Activated naive CD4-positive, alpha-beta T cell treated with anti-CD3 and anti-CD28 coated beads for 36 hours (primary cell): ENCODE measurements at regions of chr2 and their contacts with region 1.

Region 1: GRCh38 chr2:58046585-58047372 is at the start of gene VRK2:
- DNase-seq: peak; percentile 90
- H3K4me3 Mint-ChIP-seq: peak within 1 kb of the TSS; percentile 88
- H3K27ac Mint-ChIP-seq: peak within 1 kb of the TSS; percentile 93
- H3K4me1 Mint-ChIP-seq: peaks cover 45% of the 10 kb centered on the region
- H3K27me3 Mint-ChIP-seq: no peaks in the 10 kb centered on the region
- total RNA-seq, gene VRK2: 14.7 to 16.1 TPM

Region 2: GRCh38 chr2:58019209-58019608 is 27.6 kb before region 1 on chr2:
- CTCF ChIA-PET with region 1: no interaction called
- intact Hi-C with region 1: loop called (anchors 1 kb)
- DNase-seq: no peak
- H3K4me3 Mint-ChIP-seq: no peak overlapping the region
- H3K27ac Mint-ChIP-seq: no peak overlapping the region
- H3K4me1 Mint-ChIP-seq: peaks cover 13% of the 10 kb centered on the region
- H3K27me3 Mint-ChIP-seq: no peaks in the 10 kb centered on the region

Region 3: DNA sequence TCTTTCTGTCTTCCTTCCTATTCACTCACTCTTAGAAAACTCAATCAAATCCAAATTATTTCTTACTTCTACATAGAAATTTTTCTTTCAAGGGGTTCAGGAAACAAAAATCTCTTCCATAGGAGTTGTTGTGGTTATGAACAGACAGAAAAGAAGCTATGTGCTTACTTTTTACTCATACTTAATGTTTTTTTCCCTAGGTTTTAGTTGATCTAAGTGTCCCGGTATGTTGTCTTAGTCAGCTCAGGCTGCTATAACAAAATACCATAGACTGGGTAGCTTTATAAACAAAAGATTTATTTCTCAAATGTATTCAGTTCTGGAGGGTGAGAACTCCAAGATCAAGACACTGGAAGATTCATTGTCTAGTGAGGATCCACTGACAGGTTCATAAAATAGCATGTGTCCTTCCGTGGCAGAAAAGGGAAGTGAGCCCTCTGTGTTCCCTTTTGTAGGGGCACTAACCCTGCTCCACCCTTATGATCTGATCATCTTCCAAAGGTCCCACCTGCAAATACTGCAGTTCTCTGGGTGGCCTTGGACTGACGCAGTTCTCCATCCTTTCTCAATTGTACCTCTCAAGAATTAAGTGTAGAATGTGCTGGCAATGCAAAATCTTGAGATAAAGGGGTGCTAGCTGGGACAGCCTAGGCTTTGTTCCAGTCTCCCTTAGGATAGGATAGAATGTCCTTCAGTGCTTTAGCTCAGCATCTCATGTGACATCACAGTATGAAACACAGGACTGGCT is 14.6 kb before region 1 on chr2:
- CTCF ChIA-PET with region 1: no interaction called
- intact Hi-C with region 1: no loop called
- DNase-seq: no peak
- H3K4me3 Mint-ChIP-seq: no peak overlapping the region
- H3K27ac Mint-ChIP-seq: no peak overlapping the region
- H3K4me1 Mint-ChIP-seq: no peaks in the 10 kb centered on the region
- H3K27me3 Mint-ChIP-seq: no peaks in the 10 kb centered on the region

Region 4: DNA sequence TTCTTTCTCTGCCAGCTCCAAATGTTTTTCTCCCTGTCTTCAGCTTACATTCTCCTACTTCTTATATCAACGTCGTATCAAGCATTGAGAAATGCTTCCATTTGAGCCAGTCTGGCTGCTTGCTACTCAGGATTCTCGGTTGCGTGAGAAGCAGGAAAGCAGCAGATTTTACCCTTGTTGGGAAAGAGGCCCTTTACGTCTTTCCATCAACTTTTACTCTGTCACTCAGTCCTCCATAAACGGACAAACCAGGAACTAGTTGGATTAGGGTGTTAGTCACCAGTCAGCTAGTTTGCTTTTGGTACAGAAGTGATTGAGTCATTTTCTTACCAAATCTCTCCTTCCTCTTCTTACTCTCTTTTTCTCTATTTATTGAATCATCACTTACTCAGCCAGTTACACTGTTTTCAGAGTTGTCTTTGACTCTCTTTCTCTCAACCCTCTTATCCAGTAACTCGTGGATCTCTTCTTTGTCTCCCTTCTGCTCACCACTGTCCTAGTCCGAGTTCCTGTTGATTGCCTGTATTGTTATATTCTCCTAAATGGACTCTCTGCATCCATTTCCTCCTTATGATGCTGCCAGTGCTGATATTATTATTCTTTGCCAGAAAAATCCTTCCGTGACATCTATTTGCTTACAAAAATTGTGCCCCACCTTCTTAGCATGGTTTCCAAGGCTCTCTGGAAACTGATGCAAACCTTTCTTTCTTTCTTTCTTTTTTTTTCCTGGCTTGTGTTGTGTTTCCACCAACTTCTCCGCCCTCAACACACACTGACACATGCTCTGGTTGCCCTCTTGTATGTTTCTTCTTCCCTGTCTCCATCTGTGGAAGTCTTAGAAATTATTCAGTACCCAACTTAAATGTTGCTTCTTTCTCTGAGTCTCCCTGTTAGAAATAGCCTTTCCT is 61.3 kb after region 1 on chr2:
- CTCF ChIA-PET with region 1: no interaction called
- intact Hi-C with region 1: loop called (anchors 1 kb)
- DNase-seq: no peak
- H3K4me3 Mint-ChIP-seq: no peak overlapping the region
- H3K27ac Mint-ChIP-seq: no peak overlapping the region
- H3K4me1 Mint-ChIP-seq: peaks cover 13% of the 10 kb centered on the region
- H3K27me3 Mint-ChIP-seq: no peaks in the 10 kb centered on the region

Region 5: GRCh38 chr2:58240670-58241545 is 194.1 kb after region 1 on chr2 and contains the start of gene FANCL:
- CTCF ChIA-PET with region 1: no interaction called
- intact Hi-C with region 1: loop called (anchors 1 kb)
- DNase-seq: peak; percentile 81
- H3K4me3 Mint-ChIP-seq: peak within 1 kb of the TSS; percentile 84
- H3K27ac Mint-ChIP-seq: peak within 1 kb of the TSS; percentile 82
- H3K4me1 Mint-ChIP-seq: peaks cover 26% of the 10 kb centered on the region
- H3K27me3 Mint-ChIP-seq: peaks cover 15% of the 10 kb centered on the region
- total RNA-seq, gene FANCL: 14.3 to 16.3 TPM

Region 6: GRCh38 chr2:58350484-58350883 is 303.7 kb after region 1 on chr2:
- CTCF ChIA-PET with region 1: no interaction called
- intact Hi-C with region 1: loop called (anchors 5 kb)
- DNase-seq: no peak
- H3K4me3 Mint-ChIP-seq: no peak overlapping the region
- H3K27ac Mint-ChIP-seq: no peak overlapping the region
- H3K4me1 Mint-ChIP-seq: no peaks in the 10 kb centered on the region
- H3K27me3 Mint-ChIP-seq: peaks cover 21% of the 10 kb centered on the region

Region 7: DNA sequence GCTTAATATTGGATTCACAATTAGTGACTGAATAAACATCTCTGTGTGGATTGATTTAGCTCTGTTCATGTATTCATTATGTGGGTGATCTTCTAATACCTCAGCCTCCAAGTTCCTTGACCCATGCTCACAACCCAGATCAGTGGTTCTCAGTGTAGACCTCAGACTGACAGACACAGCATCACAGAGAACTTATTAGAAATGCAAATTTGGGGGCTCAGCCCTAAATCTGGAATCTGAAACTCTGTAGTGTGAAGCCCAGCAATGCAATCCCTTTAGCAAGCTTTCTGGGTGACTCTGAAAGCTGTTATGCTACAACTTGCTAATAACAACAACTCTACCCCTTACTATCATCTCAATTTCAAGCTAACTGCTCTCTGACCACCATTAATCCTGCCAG is 467.5 kb after region 1 on chr2:
- CTCF ChIA-PET with region 1: no interaction called
- intact Hi-C with region 1: loop called (anchors 10 kb)
- DNase-seq: no peak
- H3K4me3 Mint-ChIP-seq: no peak overlapping the region
- H3K27ac Mint-ChIP-seq: no peak overlapping the region
- H3K4me1 Mint-ChIP-seq: no peaks in the 10 kb centered on the region
- H3K27me3 Mint-ChIP-seq: peaks cover 2% of the 10 kb centered on the region